ENCODE measurements at regions of chr17 and their contacts with region 1.

Region 1: GRCh38 chr17:35969558-35970380 is 11.5 kb downstream of the CCL16 start:
- DNase-seq: peak; percentile 85
- H3K4me3 ChIP-seq: no peak overlapping the region
- H3K27ac ChIP-seq: no peak overlapping the region
- H3K4me1 ChIP-seq: peaks cover 32% of the 10 kb centered on the region
- H3K27me3 ChIP-seq: no peaks in the 10 kb centered on the region
- CTCF ChIP-seq: peak; percentile 69 to 76
- POLR2A ChIP-seq: no peak

Region 2: GRCh38 chr17:35953720-35954119 is 16.0 kb before region 1 on chr17:
- CTCF ChIA-PET with region 1: interaction called, 37 read pairs
- POLR2A ChIA-PET with region 1: no interaction called
- dilution Hi-C with region 1: no loop called
- intact Hi-C with region 1: no loop called
- DNase-seq: no peak
- H3K4me3 ChIP-seq: no peak overlapping the region
- H3K27ac ChIP-seq: no peak overlapping the region
- H3K4me1 ChIP-seq: no peaks in the 10 kb centered on the region
- H3K27me3 ChIP-seq: peaks cover 2 to 5% of the 10 kb centered on the region in 2 experiments
- CTCF ChIP-seq: no peak
- POLR2A ChIP-seq: no peak

Region 3: DNA sequence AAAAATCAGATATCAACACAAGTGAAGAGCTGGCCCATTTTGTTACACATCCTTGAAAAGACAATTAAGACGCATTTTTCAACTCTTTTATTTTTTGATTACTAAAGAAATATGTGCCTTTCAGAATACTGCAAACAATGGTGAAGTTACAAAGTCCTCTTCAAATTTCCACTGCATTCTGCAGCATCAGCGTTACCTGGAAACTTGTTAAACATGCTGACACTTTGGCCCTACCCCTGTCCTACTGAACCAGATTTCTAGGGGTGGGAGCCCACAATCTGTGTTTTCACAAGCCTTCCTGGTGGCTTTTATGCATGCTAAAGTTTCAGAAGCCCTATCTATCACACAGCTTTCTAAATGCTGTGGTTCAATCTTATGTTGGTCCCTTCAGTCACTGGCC is 21.3 kb after region 1 on chr17:
- CTCF ChIA-PET with region 1: interaction called, 11 read pairs
- POLR2A ChIA-PET with region 1: no interaction called
- dilution Hi-C with region 1: no loop called
- intact Hi-C with region 1: loop called (anchors 1 kb)
- DNase-seq: no peak
- H3K4me3 ChIP-seq: no peak overlapping the region
- H3K27ac ChIP-seq: no peak overlapping the region
- H3K4me1 ChIP-seq: peaks cover 30% of the 10 kb centered on the region
- H3K27me3 ChIP-seq: no peaks in the 10 kb centered on the region
- CTCF ChIP-seq: no peak
- POLR2A ChIP-seq: no peak

Region 4: GRCh38 chr17:36008998-36009665 is 39.4 kb after region 1 on chr17:
- CTCF ChIA-PET with region 1: interaction called, 125 read pairs
- POLR2A ChIA-PET with region 1: no interaction called
- dilution Hi-C with region 1: no loop called
- intact Hi-C with region 1: loop called (anchors 1 kb)
- DNase-seq: peak; percentile 36
- H3K4me3 ChIP-seq: no peak overlapping the region
- H3K27ac ChIP-seq: no peak overlapping the region
- H3K4me1 ChIP-seq: no peaks in the 10 kb centered on the region
- H3K27me3 ChIP-seq: no peaks in the 10 kb centered on the region
- CTCF ChIP-seq: peak; percentile 49 to 82
- POLR2A ChIP-seq: no peak

Region 5: DNA sequence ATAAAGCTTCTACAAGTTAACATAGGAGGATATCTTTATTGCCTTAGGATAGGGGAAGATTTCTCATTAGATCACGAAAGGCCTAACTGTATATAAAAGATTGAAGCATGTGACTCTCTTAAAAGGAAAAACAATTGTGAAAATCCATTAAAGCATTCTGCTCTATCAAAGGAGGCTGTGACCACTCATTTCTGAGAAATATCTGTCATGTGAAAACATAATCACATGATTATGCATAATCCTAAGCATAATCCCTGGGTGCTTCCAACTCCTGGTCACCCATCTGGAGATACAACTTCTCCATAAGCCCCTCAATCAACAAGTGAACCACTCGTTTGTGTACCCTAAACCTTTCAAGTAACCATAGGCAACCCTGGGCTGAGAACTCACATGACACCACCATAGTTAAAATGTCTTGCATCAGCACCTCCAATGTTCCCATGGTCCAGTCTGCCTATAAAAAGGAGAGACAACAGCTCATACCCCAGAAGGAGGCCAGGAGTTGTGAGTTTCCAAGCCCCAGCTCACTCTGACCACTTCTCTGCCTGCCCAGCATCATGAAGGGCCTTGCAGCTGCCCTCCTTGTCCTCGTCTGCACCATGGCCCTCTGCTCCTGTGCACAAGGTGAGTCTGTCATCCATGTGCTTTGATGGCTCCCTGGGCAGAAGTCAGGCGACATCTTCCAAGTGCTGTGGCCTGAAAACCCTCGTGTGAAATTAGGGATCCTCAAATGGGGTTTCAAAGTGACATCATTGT is 94.2 kb after region 1 on chr17 and contains the start of gene CCL18:
- CTCF ChIA-PET with region 1: interaction called, 467 read pairs
- POLR2A ChIA-PET with region 1: no interaction called
- dilution Hi-C with region 1: no loop called
- intact Hi-C with region 1: no loop called
- DNase-seq: no peak
- H3K4me3 ChIP-seq: no peak within 1 kb of the TSS
- H3K27ac ChIP-seq: no peak within 1 kb of the TSS
- H3K4me1 ChIP-seq: no peaks in the 10 kb centered on the region
- H3K27me3 ChIP-seq: no peaks in the 10 kb centered on the region
- CTCF ChIP-seq: no peak
- POLR2A ChIP-seq: no peak
- total RNA-seq, gene CCL18: not detected in 2 replicates

Region 6: DNA sequence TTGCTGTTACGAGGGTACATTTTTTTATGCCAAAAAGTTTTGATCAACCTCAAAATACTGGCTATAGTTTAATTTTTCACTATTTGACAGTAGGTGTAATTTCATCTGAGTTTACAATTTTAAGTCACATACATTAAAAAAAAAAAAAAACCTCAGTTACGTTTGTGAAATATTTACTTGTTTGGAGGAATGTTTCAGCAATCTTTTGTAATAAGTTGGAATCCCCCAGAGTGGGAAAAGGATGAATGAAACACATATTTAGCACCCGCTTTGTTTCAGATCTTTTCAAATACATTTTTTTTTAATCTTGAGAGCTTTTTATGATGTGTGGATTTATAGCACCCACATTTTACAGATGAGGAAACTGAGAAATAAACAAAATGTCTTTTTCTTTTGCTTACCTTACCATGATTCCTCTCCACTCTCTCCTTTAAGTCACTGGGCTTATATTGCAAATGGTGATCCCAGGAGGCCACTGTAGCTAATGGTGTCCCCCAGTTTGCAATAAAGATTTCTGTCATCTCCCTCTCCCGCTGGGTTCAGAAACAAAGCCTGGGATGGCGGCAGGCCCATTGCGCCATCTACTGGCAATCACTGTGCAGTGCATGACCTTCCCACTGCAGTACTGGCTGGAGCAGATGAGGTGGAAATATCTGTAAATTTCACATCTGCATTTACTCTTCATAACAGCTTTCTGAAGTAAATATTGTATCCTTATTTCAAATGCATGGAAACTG is 179.0 kb after region 1 on chr17:
- CTCF ChIA-PET with region 1: interaction called, 154 read pairs
- POLR2A ChIA-PET with region 1: interaction called, 4 read pairs
- dilution Hi-C with region 1: no loop called
- intact Hi-C with region 1: loop called (anchors 1 kb)
- DNase-seq: peak; percentile 67
- H3K4me3 ChIP-seq: no peak overlapping the region
- H3K27ac ChIP-seq: no peak overlapping the region
- H3K4me1 ChIP-seq: no peaks in the 10 kb centered on the region
- H3K27me3 ChIP-seq: peaks cover 7 to 8% of the 10 kb centered on the region in 2 experiments
- CTCF ChIP-seq: peak; percentile 93 to 99
- POLR2A ChIP-seq: no peak

Measured in endothelial cell of umbilical vein (primary cell).